ENCODE measurements at regions of chr9 and their contacts with region 1.

Region 1: GRCh38 chr9:99819856-99820684 is 1.6 kb upstream of the NR4A3 start:
- DNase-seq: peak; percentile 90 to 97
- ATAC-seq: peak; percentile 53 to 60
- H3K4me3 ChIP-seq: peak overlapping the region; percentile 81 to 88 (median 84)
- H3K27ac ChIP-seq: peak overlapping the region; percentile 95 to 100 (median 100)
- H3K4me1 ChIP-seq: peaks cover 8 to 29% of the 10 kb centered on the region in 2 donors
- H3K27me3 ChIP-seq: peaks cover 0 to 6% (median 0%) of the 10 kb centered on the region in 3 donors
- CTCF ChIP-seq: peak in 1 of 5 experiments; percentile 23
- POLR2A ChIP-seq: peak; percentile 74 to 80

Region 2: GRCh38 chr9:97982683-97983588 is 1837.1 kb before region 1 on chr9 and contains the start of gene ANP32B:
- in situ Hi-C with region 1: no loop called
- intact Hi-C with region 1: loop called (anchors 10 kb)
- DNase-seq: peak; percentile 73 to 85
- ATAC-seq: peak; percentile 55 to 59
- H3K4me3 ChIP-seq: peak within 1 kb of the TSS; percentile 84 to 99 (median 89)
- H3K27ac ChIP-seq: peak within 1 kb of the TSS; percentile 93 to 99 (median 96)
- H3K4me1 ChIP-seq: peaks cover 48 to 55% of the 10 kb centered on the region in 2 donors
- H3K27me3 ChIP-seq: no peaks in the 10 kb centered on the region
- CTCF ChIP-seq: peak; percentile 73 to 99 (median 97)
- POLR2A ChIP-seq: peak; percentile 58 to 63
- total RNA-seq, gene ANP32B: 8.2 to 24.5 (median 17.8) TPM

Region 3: DNA sequence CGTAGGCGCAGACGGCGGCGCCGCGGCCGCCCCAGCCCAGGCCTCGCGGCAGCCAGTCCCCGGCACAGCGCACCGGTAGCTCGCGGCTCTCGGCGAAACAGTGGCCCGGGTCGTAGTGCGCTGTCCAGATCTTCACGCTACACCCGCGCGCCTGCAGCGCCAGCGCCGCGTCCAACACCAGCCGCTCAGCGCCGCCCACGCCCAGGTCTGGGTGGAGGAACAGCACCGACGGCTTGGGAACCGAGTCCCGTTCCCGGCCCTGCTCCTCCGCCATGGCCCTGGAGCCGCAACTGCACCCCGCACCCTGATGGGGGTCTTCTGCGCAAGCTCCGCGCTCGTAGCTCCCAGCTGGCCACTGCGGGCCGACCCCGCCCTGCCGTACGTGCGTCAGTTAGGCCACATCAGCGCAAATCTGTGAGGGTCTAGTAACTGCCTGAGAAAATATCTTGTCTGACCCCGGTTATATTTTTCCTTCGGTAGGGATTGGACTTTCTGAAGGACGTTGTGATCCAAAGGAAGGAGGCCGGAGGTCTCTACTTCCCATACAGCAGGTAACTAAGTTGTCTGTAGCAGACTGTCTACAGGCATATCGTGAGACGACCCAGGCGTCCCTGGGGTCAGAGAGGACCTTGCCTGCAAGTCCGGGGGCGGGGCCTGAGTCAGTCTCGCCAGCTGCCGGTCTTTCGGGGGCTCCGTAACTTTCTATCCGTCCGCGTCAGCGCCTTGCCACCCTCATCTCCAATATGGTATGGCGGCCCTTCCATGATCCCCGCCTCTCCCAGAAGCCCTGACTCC is 598.3 kb before region 1 on chr9 and contains the starts of genes ALG2 and SEC61B:
- in situ Hi-C with region 1: loop called in 1 of 4 experiments (anchors 25 kb)
- intact Hi-C with region 1: loop called (anchors 2 kb)
- DNase-seq: peak; percentile 91 to 93
- ATAC-seq: peak; percentile 94 to 95
- H3K4me3 ChIP-seq: peak within 1 kb of the TSS; percentile 89 to 98 (median 94)
- H3K27ac ChIP-seq: peak within 1 kb of the TSS; percentile 88 to 98 (median 96)
- H3K4me1 ChIP-seq: peaks cover 70 to 77% of the 10 kb centered on the region in 2 donors
- H3K27me3 ChIP-seq: no peaks in the 10 kb centered on the region
- CTCF ChIP-seq: no peak
- POLR2A ChIP-seq: peak; percentile 98
- total RNA-seq, gene ALG2: 12.3 to 19.9 (median 14.7) TPM
- total RNA-seq, gene SEC61B: 20.5 to 50.5 (median 24.9) TPM

Region 4: GRCh38 chr9:99445371-99445891 is 374.6 kb before region 1 on chr9:
- in situ Hi-C with region 1: no loop called
- intact Hi-C with region 1: loop called (anchors 5 kb)
- DNase-seq: peak; percentile 72 to 88
- ATAC-seq: peak; percentile 98 to 99
- H3K4me3 ChIP-seq: no peak overlapping the region
- H3K27ac ChIP-seq: peak overlapping the region; percentile 60 to 89 (median 76)
- H3K4me1 ChIP-seq: peaks cover 16 to 19% of the 10 kb centered on the region in 2 donors
- H3K27me3 ChIP-seq: no peaks in the 10 kb centered on the region
- CTCF ChIP-seq: no peak
- POLR2A ChIP-seq: peak in 1 of 2 donors; percentile 39

Region 5: DNA sequence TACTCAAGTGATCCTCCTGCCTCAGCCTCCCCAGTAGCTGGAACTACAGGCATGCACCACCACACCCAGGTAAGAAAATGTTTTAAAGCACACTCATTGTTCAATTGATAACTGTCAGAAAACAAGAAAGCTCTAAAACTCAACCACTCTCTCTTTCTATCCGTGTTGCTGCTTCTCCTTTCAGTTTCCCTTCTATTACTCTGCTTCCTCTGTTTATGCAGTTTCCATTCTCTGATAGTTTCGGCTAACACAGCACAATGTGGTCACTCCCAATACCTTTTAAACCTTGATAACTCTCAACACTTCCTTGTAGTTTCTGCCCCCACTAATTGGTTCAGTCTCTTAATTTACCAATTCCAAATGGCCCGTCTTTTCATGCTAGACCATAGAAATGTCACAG is 57.6 kb before region 1 on chr9:
- in situ Hi-C with region 1: no loop called
- intact Hi-C with region 1: no loop called
- DNase-seq: no peak
- ATAC-seq: no peak
- H3K4me3 ChIP-seq: no peak overlapping the region
- H3K27ac ChIP-seq: no peak overlapping the region
- H3K4me1 ChIP-seq: no peaks in the 10 kb centered on the region
- H3K27me3 ChIP-seq: no peaks in the 10 kb centered on the region
- CTCF ChIP-seq: no peak
- POLR2A ChIP-seq: no peak

Region 6: GRCh38 chr9:100216178-100216787 is 396.2 kb after region 1 on chr9:
- in situ Hi-C with region 1: loop called in 1 of 4 experiments (anchors 25 kb)
- intact Hi-C with region 1: no loop called
- DNase-seq: peak in 1 of 2 donors; percentile 28
- ATAC-seq: peak in 1 of 2 donors; percentile 53
- H3K4me3 ChIP-seq: no peak overlapping the region
- H3K27ac ChIP-seq: no peak overlapping the region
- H3K4me1 ChIP-seq: peaks cover 0 to 4% of the 10 kb centered on the region in 2 donors
- H3K27me3 ChIP-seq: no peaks in the 10 kb centered on the region
- CTCF ChIP-seq: peak; percentile 40 to 70 (median 52)
- POLR2A ChIP-seq: no peak

Region 7: DNA sequence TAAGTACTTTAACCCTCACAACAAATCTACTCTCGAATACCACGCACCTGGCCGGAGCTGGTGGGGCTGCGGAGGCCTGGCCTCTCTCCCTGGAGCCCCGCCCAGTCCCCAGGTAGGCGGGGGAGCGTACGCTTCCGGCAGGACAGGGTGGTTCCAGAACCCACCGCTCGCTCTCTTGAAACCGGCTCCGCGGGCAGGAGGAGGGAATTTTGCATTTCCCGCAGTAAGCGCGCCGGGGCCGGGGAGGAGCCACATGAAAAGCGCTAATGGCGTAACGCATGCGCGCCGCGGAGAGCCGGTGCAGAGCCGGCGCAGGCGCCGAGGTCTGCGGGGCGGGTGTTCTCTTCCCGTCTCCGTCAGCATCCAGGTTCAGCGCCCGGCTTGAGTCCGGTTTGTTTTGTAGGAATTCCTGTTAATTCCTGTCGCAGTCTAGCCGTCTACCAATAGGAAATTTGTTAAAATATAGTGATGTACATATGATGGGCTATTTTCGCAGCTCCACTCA is 778.6 kb after region 1 on chr9:
- in situ Hi-C with region 1: no loop called
- intact Hi-C with region 1: loop called (anchors 10 kb)
- DNase-seq: peak; percentile 30 to 50
- ATAC-seq: peak; percentile 31 to 35
- H3K4me3 ChIP-seq: peak overlapping the region; percentile 58 to 67 (median 62)
- H3K27ac ChIP-seq: peak overlapping the region in 2 of 4 donors; percentile 3 to 9
- H3K4me1 ChIP-seq: peaks cover 8 to 12% of the 10 kb centered on the region in 2 donors
- H3K27me3 ChIP-seq: no peaks in the 10 kb centered on the region
- CTCF ChIP-seq: no peak
- POLR2A ChIP-seq: no peak